ENCODE measurements at regions of chr1 and their contacts with region 1.

Region 1: DNA sequence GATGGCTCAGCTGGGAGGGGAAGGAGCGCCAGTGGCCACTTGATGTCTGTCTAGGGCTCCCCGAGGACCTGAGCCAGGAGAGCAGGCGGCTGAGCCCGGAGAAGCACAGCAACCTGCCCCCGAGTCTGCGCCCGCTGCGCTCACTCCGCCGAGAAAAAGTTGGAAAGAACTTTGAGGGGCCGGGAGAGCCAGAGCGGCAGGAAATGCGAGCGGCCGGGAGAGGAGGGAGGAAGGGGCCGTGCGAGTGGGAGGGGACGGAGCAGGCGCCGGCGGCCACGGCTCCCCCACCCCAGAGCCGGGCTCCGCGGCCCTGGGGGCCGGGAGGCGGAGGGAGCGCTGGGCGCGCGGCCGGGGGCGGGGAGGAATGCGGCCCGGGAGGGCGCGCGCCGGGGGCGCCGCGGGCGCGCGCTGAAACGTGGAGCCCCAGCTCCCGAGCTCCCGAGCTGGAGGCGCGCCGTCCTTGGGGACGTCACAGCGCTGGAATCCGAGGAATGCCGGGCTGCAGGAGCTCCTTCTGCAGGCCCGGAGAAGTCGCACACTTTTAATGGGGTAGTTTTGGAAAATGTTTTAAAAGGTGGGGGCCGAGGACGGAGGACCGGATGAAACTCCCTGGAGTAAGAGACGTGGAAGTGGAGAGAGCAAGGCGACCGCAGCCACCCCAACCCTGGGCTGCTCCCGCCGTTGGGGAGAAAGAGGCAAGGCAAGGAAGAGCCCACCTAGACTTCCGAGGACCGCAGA is at the start of gene PTPN14:
- DNase-seq: peak in 1 of 2 donors; percentile 90
- H3K4me3 ChIP-seq: peak within 1 kb of the TSS; percentile 55 to 90
- H3K27ac ChIP-seq: peak within 1 kb of the TSS; percentile 98
- H3K4me1 ChIP-seq: peaks cover 41% of the 10 kb centered on the region
- H3K27me3 ChIP-seq: no peaks in the 10 kb centered on the region
- CTCF ChIP-seq: no peak
- POLR2A ChIP-seq: peak in 1 of 2 donors; percentile 43
- total RNA-seq, gene PTPN14: 24.3 TPM

Region 2: GRCh38 chr1:214281021-214281719 is 270.4 kb before region 1 on chr1 and contains the start of gene SMYD2:
- intact Hi-C with region 1: loop called (anchors 10 kb)
- DNase-seq: no peak
- H3K4me3 ChIP-seq: peak within 1 kb of the TSS; percentile 85 to 97
- H3K27ac ChIP-seq: peak within 1 kb of the TSS; percentile 81
- H3K4me1 ChIP-seq: peaks cover 24% of the 10 kb centered on the region
- H3K27me3 ChIP-seq: no peaks in the 10 kb centered on the region
- CTCF ChIP-seq: no peak
- POLR2A ChIP-seq: peak in 1 of 2 donors; percentile 20
- total RNA-seq, gene SMYD2: 18.2 TPM

Region 3: DNA sequence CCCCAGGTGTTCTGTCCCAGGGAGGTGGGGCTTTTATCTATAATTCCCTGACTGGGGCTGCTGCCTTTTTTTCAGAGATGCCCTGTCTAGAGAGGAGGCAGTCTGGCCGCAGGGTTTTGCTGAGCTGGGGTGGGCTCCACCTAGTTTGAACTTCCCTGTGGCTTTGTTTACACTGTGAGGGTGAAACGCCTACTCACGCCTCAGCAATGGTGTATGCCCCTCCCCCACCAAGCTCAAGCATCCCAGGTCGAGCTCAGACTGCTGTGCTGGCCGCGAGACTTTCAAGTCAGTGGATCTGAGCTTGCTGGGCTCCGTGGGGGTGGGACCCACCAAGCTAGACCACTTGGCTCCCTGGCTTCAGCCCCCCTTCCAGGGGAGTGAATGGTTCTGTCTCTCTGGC is 175.7 kb after region 1 on chr1:
- intact Hi-C with region 1: no loop called
- DNase-seq: no peak
- H3K4me3 ChIP-seq: no peak overlapping the region
- H3K27ac ChIP-seq: no peak overlapping the region
- H3K4me1 ChIP-seq: no peaks in the 10 kb centered on the region
- H3K27me3 ChIP-seq: no peaks in the 10 kb centered on the region
- CTCF ChIP-seq: no peak
- POLR2A ChIP-seq: no peak

Region 4: GRCh38 chr1:214847071-214847810 is 295.6 kb after region 1 on chr1:
- intact Hi-C with region 1: no loop called
- DNase-seq: no peak
- H3K4me3 ChIP-seq: no peak overlapping the region
- H3K27ac ChIP-seq: no peak overlapping the region
- H3K4me1 ChIP-seq: no peaks in the 10 kb centered on the region
- H3K27me3 ChIP-seq: no peaks in the 10 kb centered on the region
- CTCF ChIP-seq: no peak
- POLR2A ChIP-seq: no peak

Measured in vagina (tissue), 2 donors.